BJ (cell line): ENCODE measurements at regions of chr15 and their contacts with region 1.

Region 1: GRCh38 chr15:57861036-57861638 is 154.6 kb downstream of the POLR2M start:
- DNase-seq: no peak
- H3K4me3 ChIP-seq: no peak overlapping the region
- H3K27me3 ChIP-seq: no peaks in the 10 kb centered on the region
- CTCF ChIP-seq: peak; percentile 70

Region 2: GRCh38 chr15:57640935-57641682 is 220.0 kb before region 1 on chr15:
- CTCF ChIA-PET with region 1: interaction called, 14 read pairs
- POLR2A ChIA-PET with region 1: no interaction called
- DNase-seq: no peak
- H3K4me3 ChIP-seq: no peak overlapping the region
- H3K27me3 ChIP-seq: no peaks in the 10 kb centered on the region
- CTCF ChIP-seq: peak; percentile 67

Region 3: GRCh38 chr15:57743424-57743823 is 117.7 kb before region 1 on chr15:
- CTCF ChIA-PET with region 1: interaction called, 230 read pairs
- POLR2A ChIA-PET with region 1: no interaction called
- DNase-seq: no peak
- H3K4me3 ChIP-seq: no peak overlapping the region
- H3K27me3 ChIP-seq: no peaks in the 10 kb centered on the region
- CTCF ChIP-seq: peak; percentile 16; the same call in 1 of the 2 replicates

Region 4: DNA sequence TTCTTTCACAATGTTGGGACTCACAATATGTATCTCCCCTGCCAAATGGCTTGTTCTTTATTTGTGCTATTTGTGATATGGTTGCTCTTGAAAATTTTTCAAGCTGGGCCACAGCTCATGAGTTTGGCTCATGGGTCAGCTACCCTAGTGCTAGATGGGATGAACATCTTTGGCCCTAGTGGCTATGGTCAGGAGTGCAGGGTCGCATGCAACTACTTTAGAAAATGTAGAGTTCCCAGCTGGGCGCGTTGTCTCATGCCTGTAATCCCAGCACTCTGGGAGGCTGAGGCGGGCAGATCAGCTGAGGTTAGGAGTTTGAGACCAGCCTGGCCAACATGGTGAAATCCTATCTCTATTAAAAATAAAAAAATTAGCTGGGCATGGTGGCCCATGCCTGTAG is 98.8 kb before region 1 on chr15:
- CTCF ChIA-PET with region 1: interaction called, 14 read pairs
- POLR2A ChIA-PET with region 1: no interaction called
- DNase-seq: no peak
- H3K4me3 ChIP-seq: no peak overlapping the region
- H3K27me3 ChIP-seq: no peaks in the 10 kb centered on the region
- CTCF ChIP-seq: 0 out of 2 replicates have a peak, but pooled peaks have one; percentile 10

Region 5: GRCh38 chr15:57769266-57769665 is 91.9 kb before region 1 on chr15:
- CTCF ChIA-PET with region 1: interaction called, 15 read pairs
- POLR2A ChIA-PET with region 1: no interaction called
- DNase-seq: peak; percentile 55
- H3K4me3 ChIP-seq: no peak overlapping the region
- H3K27me3 ChIP-seq: no peaks in the 10 kb centered on the region
- CTCF ChIP-seq: no peak

Region 6: GRCh38 chr15:57849317-57849716 is 11.8 kb before region 1 on chr15:
- CTCF ChIA-PET with region 1: interaction called, 22 read pairs
- POLR2A ChIA-PET with region 1: no interaction called
- DNase-seq: no peak
- H3K4me3 ChIP-seq: no peak overlapping the region
- H3K27me3 ChIP-seq: no peaks in the 10 kb centered on the region; the same call in 1 of the 2 replicates
- CTCF ChIP-seq: no peak

Region 7: DNA sequence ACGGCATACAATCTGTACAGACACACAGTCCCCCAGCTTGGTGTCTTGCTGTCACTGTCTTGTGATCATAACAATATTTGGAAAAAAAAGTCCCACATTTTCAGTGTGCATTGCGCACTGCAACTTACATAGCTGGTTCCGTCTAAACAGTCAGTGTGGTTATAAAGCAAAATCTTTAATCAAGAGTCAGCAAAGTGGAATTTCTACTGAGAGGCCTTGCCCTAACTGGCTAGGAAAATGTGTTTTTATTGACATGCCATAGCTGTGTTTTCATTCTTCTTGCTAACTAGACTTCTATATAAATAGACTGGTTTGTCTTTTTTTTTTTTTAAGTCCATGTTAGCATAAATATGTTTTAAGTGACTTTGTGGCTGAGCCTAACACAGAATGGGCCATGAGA is 20.2 kb after region 1 on chr15:
- CTCF ChIA-PET with region 1: interaction called, 12 read pairs
- POLR2A ChIA-PET with region 1: interaction called, 8 read pairs
- DNase-seq: peak; percentile 66
- H3K4me3 ChIP-seq: no peak overlapping the region
- H3K27me3 ChIP-seq: no peaks in the 10 kb centered on the region
- CTCF ChIP-seq: no peak